Body of pancreas (tissue), 4 donors: ENCODE measurements at regions of chr6 and their contacts with region 1.

Region 1: DNA sequence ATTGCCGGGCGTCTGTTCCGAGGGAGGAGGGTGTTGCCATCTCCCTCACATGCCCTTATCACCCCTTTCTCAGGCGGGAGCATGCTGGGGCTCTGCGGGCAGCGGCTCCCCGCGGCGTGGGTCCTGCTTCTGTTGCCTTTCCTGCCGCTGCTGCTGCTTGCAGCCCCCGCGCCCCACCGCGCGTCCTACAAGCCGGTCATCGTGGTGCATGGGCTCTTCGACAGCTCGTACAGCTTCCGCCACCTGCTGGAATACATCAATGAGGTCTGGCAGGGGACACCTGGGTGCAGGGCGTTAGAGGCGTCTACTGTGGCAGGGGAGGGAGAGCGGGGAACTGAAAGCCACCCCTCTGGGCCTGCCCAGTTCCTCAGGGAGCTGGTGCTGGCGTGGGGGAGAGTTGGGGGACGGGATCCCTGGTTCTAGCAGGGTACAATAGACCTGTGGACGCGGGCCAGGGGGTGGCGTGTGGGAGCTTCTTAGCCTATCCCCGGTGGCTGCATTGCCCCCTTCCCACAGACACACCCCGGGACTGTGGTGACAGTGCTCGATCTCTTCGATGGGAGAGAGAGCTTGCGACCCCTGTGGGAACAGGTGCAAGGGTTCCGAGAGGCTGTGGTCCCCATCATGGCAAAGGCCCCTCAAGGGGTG is 697 bp downstream of the PPT2 start:
- DNase-seq: peak; percentile 73 to 85 (median 80)
- ATAC-seq: peak; percentile 78
- H3K4me3 ChIP-seq: peak overlapping the region; percentile 72
- H3K27ac ChIP-seq: peak overlapping the region; percentile 35 to 90 (median 77)
- H3K4me1 ChIP-seq: peaks cover 25% of the 10 kb centered on the region
- H3K27me3 ChIP-seq: no peaks in the 10 kb centered on the region
- CTCF ChIP-seq: peak; percentile 23 to 79 (median 68)
- POLR2A ChIP-seq: peak in 2 of 3 donors; percentile 39 to 48

Region 2: DNA sequence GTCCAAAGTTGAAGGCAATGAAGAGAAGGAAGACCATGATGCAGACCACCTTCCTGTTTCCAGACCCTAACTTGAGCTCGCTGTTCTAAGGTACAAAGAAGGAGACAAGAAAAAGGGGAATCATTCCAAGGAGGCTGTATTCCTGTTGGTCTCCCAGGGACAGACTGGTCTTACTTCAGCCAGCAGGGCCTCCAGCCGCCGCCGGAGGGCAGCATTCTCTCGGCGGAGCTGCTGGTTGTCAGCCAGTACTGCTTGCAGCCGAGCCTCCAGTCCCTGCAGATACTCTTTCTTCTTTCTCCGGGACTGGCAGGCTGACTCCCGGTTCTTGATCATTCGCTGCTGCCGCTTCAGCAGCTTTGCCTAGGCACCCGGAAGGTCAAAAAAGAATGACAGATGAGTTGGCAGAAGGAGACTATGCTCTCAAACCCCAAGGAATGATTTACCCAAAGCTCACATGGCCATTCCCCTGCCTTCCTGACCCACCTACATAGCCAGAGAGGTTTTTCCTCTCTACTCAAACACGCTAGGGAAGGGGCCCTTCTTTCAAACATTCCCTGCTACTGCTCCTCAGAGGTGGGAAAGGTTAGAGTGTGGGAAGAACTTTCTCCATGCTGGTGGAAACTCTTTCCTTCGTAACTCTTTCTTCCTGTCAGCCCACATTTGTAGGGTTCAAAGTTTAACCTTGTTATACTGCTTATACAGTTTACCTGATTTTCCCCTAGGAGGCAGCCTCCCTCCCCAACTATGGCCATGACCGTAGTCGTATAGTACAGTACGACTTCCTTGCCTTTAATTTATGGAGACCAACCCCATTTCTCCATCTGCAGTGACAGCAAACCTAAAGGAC is 35.6 kb before region 1 on chr6:
- intact Hi-C with region 1: loop called (anchors 5 kb)
- DNase-seq: peak; percentile 86 to 89 (median 88)
- ATAC-seq: peak; percentile 84
- H3K4me3 ChIP-seq: no peak overlapping the region
- H3K27ac ChIP-seq: peak overlapping the region in 2 of 4 donors; percentile 33 to 43
- H3K4me1 ChIP-seq: peaks cover 14% of the 10 kb centered on the region
- H3K27me3 ChIP-seq: no peaks in the 10 kb centered on the region
- CTCF ChIP-seq: peak; percentile 82 to 92 (median 89)
- POLR2A ChIP-seq: no peak

Region 3: DNA sequence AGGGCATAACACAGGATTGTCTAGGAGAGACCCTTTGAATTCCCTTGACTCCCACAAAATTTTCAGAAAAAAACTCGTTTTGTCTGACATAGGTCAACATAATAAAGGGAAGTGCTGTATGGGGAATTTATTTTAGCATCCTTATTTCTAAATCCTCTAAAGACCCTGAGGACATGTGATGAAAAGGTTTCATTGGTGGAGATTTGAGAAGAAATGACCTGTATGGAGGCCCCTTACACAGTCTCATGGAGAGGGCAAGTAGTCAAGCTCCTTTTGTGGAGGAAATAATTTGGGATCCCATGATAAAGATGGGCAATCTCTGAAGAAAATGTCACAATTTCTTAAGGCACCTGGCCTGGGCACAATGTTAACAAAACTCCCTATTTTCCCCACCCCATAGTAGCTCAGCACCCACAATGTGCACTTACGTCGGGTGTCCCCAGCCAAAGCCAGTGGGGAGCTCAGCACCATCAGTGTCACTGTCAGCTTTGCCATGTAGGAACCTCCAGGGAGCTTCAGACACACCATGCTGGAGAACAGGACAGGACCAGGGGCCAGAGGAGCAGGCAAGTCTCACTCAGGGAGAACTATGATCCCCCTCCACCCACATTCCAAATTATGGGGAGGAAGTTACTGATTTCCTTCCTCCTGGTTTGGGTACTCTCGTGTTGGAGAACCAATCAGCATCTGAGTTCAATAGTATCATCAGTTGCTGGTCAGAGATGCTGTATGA is 375.2 kb after region 1 on chr6 and contains the start of gene HLA-DRB5:
- intact Hi-C with region 1: no loop called
- DNase-seq: peak in 3 of 4 donors; percentile 8 to 49 (median 12)
- ATAC-seq: no peak
- H3K4me3 ChIP-seq: no peak within 1 kb of the TSS
- H3K27ac ChIP-seq: no peak within 1 kb of the TSS
- H3K4me1 ChIP-seq: no peaks in the 10 kb centered on the region
- H3K27me3 ChIP-seq: no peaks in the 10 kb centered on the region
- CTCF ChIP-seq: no peak
- POLR2A ChIP-seq: no peak
- total RNA-seq, gene HLA-DRB5: 1.3 to 19.8 TPM